Panc1 (cell line): ENCODE measurements at regions of chr6 and their contacts with region 1.

Region 1: GRCh38 chr6:163263196-163263595 is 151.3 kb upstream of the QKI start:
- DNase-seq: no peak
- ATAC-seq: no peak
- H3K4me3 ChIP-seq: no peak overlapping the region
- H3K27ac ChIP-seq: no peak overlapping the region
- H3K4me1 ChIP-seq: no peaks in the 10 kb centered on the region
- H3K27me3 ChIP-seq: no peaks in the 10 kb centered on the region
- CTCF ChIP-seq: no peak

Region 2: GRCh38 chr6:163170294-163170883 is 92.8 kb before region 1 on chr6:
- CTCF ChIA-PET with region 1: no interaction called
- POLR2A ChIA-PET with region 1: no interaction called
- in situ Hi-C with region 1: no loop called
- intact Hi-C with region 1: no loop called
- DNase-seq: peak; percentile 7
- ATAC-seq: peak; percentile 53; the same call in 1 of the 2 replicates
- H3K4me3 ChIP-seq: no peak overlapping the region
- H3K27ac ChIP-seq: no peak overlapping the region
- H3K4me1 ChIP-seq: no peaks in the 10 kb centered on the region
- H3K27me3 ChIP-seq: no peaks in the 10 kb centered on the region
- CTCF ChIP-seq: peak; percentile 83

Region 3: DNA sequence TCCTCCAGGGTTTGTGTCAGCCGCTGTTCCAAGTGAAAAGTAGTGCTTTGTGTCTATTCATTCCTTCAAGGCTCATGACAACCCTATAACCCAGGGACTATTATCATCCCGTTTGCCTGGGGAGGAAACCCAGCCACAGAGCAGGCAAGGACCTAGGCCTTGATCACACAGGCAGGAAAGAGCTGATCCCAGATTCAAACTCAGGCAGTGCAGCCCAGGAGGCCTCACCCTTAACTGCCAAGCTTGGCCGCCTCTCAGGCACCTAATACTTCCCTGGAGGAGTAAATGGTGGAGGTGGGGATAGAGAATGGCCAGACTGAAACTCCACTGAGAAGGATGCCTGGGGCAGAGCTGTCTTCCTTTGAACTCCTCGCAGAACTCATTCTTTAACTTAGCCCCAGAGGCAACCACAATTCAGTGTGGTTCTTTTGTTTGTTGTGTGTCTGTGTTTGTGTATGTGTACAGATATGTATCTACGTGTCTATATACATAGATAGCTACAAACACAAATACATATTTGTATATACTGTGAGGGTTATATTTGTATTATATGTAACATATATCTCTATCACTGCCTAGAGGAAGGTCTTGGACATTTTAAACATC is 63.7 kb before region 1 on chr6:
- CTCF ChIA-PET with region 1: no interaction called
- POLR2A ChIA-PET with region 1: no interaction called
- in situ Hi-C with region 1: no loop called
- intact Hi-C with region 1: no loop called
- DNase-seq: no peak
- ATAC-seq: no peak
- H3K4me3 ChIP-seq: no peak overlapping the region
- H3K27ac ChIP-seq: no peak overlapping the region
- H3K4me1 ChIP-seq: no peaks in the 10 kb centered on the region
- H3K27me3 ChIP-seq: no peaks in the 10 kb centered on the region
- CTCF ChIP-seq: no peak

Region 4: DNA sequence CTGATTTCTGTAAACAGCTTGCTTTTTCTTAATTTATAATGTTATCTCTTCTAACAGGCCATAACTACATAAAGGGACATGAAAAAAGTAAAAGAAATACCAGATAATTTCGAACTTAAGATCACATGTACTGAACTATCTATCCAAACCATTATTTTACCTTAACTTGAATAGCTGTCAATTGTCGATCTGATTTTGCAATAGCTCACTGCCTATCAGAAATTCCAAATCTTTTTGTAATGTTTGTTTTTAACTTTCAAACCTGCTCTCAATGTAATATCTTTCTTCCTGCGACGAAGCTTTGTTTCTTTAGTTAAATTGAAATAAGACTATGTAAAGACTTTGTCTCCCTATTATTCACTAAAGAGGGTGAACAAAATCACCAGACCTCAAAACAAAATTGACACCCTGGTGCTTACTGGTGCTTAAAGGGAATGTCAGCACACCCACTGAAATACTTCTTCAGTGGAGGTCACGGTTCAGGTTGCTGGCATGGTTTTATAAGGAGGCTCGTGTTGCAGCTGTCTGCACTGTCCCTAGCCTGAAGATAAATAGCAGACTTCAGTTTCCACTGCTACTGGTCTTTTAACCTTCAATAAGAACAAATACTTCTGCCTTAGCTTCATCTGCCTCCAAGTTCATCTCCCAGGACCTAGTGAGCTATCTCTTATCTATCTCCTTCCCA is 33.8 kb after region 1 on chr6:
- CTCF ChIA-PET with region 1: no interaction called
- POLR2A ChIA-PET with region 1: interaction called, 18 read pairs
- in situ Hi-C with region 1: no loop called
- intact Hi-C with region 1: no loop called
- DNase-seq: no peak
- ATAC-seq: no peak
- H3K4me3 ChIP-seq: no peak overlapping the region
- H3K27ac ChIP-seq: no peak overlapping the region
- H3K4me1 ChIP-seq: 0 out of 2 replicates have a peak, but pooled peaks cover 4% of the 10 kb centered on the region
- H3K27me3 ChIP-seq: no peaks in the 10 kb centered on the region
- CTCF ChIP-seq: no peak

Region 5: GRCh38 chr6:163565140-163565539 is 301.9 kb after region 1 on chr6:
- CTCF ChIA-PET with region 1: no interaction called
- POLR2A ChIA-PET with region 1: no interaction called
- in situ Hi-C with region 1: no loop called
- intact Hi-C with region 1: no loop called
- DNase-seq: no peak
- ATAC-seq: no peak
- H3K4me3 ChIP-seq: no peak overlapping the region
- H3K27ac ChIP-seq: no peak overlapping the region
- H3K4me1 ChIP-seq: peaks cover 2% of the 10 kb centered on the region; the same call in 1 of the 2 replicates
- H3K27me3 ChIP-seq: no peaks in the 10 kb centered on the region
- CTCF ChIP-seq: no peak